ENCODE measurements at regions of chr2 and their contacts with region 1.

Region 1: DNA sequence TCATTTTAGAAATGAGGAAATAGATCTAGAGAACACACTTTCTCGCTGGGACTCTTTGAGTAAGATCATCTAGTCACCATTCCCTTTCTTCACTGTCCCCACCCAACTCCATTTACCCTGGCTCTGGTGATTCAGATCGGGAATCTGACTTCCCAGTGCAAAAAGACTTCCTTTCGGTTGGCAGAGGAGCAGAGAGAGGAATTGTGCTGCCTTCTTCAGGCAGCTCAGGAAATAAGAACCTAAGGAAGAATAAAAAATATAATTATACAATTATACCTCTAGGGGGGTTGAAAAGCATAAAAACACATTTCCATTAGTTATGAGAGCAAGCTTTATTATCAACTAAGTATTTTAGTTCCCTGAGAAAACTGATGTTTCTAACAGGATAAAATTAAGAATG is 9.3 kb upstream of the MPP4 start:
- DNase-seq: peak; percentile 67
- ATAC-seq: peak; percentile 88
- H3K4me3 ChIP-seq: no peak overlapping the region
- H3K27ac ChIP-seq: no peak overlapping the region
- H3K4me1 ChIP-seq: peaks cover 11% of the 10 kb centered on the region; the same call in 1 of the 2 replicates
- H3K27me3 ChIP-seq: no peaks in the 10 kb centered on the region
- CTCF ChIP-seq: peak; percentile 67

Region 2: GRCh38 chr2:201440182-201440581 is 267.6 kb before region 1 on chr2:
- CTCF ChIA-PET with region 1: interaction called, 12 read pairs
- POLR2A ChIA-PET with region 1: no interaction called
- intact Hi-C with region 1: no loop called
- DNase-seq: peak; percentile 74
- ATAC-seq: peak; percentile 59
- H3K4me3 ChIP-seq: no peak overlapping the region
- H3K27ac ChIP-seq: no peak overlapping the region
- H3K4me1 ChIP-seq: peaks cover 8% of the 10 kb centered on the region; the same call in 1 of the 2 replicates
- H3K27me3 ChIP-seq: no peaks in the 10 kb centered on the region
- CTCF ChIP-seq: no peak

Region 3: DNA sequence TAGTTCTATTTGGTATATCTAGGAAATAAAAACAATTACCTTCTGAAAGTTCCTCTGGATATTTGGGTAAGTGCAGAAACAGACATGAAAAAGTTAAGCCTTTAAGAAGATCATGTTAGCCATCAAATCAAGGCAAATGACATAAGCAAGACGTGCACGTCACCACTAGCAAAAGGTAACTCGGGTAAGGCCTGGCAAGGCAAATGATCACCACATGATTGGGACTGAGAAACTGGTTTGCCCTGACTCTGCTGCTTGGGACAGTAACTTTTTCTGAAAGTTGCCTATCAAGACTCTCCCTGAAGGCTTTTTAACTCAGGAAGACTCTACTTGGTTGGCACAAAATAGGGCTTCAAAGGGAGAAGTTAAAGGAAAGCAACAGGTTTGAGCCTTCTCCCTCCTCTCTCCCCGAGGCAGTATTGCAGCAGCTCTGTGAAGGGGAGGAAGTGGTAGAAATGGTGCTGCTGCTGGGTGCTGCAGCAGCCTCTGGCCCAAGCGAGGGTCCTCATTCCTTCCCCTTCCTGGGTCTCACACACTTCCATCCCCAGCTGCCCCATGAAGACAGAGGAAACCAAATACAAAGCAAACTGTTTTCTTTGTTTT is 47.4 kb before region 1 on chr2:
- CTCF ChIA-PET with region 1: no interaction called
- POLR2A ChIA-PET with region 1: no interaction called
- intact Hi-C with region 1: loop called (anchors 1 kb)
- DNase-seq: no peak
- ATAC-seq: no peak
- H3K4me3 ChIP-seq: no peak overlapping the region
- H3K27ac ChIP-seq: no peak overlapping the region
- H3K4me1 ChIP-seq: peaks cover 2% of the 10 kb centered on the region; the same call in 1 of the 2 replicates
- H3K27me3 ChIP-seq: no peaks in the 10 kb centered on the region
- CTCF ChIP-seq: no peak